Activated CD4-positive, alpha-beta T cell treated with anti-CD3 and anti-CD28 coated beads for 36 hours (primary cell): ENCODE measurements at regions of chr20 and their contacts with region 1.

Region 1: DNA sequence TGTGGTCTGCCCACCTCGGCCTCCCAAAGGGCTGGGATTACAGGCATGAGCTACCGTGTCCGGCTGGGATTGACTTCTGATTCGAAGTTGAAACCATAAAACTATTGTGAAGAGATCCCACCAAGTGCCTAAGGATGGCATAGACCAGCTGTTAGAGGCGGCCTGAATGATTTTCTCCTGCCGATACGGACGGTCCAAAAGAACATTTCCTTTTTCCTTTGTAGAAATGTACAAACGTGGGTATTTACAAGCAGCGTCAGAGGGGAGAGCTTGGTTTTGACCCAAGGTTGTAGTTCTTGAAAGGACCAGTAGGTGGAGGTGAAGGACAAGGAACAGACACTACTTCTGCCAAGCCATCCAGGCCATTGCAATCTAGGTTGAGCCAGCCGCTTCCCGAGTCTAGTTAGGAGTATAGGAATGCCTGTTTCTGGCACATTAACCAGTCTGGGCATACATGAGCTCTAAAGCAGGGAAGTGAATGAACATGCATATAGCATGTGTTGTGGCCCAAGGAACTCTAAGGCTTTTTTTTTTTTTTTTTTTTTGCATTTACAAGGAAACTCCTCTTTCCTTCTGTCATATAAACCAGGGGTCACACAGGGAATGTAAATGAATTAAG is 29.1 kb downstream of the MOCS3 start:
- DNase-seq: peak; percentile 71
- ATAC-seq: peak; percentile 89
- H3K4me3 Mint-ChIP-seq: no peak overlapping the region
- H3K27ac Mint-ChIP-seq: no peak overlapping the region
- H3K4me1 Mint-ChIP-seq: no peaks in the 10 kb centered on the region
- H3K27me3 Mint-ChIP-seq: peaks cover 23% of the 10 kb centered on the region

Region 2: DNA sequence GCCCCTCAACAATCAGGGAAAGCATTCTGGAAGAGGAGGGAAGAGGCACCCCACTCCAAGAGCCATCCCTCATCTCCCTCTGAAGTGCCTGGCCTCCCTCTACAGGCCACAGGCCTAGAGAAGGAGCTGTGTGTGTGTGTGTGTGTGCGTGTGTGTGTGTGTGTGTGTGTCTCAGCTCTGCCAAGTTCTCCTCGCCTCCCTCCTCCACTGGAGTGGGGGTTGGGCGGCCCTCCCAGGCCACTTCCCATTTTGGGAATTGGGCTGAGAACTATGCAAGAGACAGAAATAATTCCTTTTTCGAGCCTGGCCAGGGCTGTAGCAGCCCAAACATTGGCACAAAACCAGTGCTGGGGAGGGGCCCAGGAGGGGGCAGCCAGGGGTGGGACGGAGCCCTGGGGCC is 1540.9 kb before region 1 on chr20:
- CTCF ChIA-PET with region 1: no interaction called
- POLR2A ChIA-PET with region 1: no interaction called
- intact Hi-C with region 1: no loop called
- DNase-seq: no peak
- ATAC-seq: no peak
- H3K4me3 Mint-ChIP-seq: no peak overlapping the region
- H3K27ac Mint-ChIP-seq: no peak overlapping the region
- H3K4me1 Mint-ChIP-seq: no peaks in the 10 kb centered on the region
- H3K27me3 Mint-ChIP-seq: peaks cover 32% of the 10 kb centered on the region

Region 3: GRCh38 chr20:51014797-51015722 is 27.4 kb after region 1 on chr20:
- CTCF ChIA-PET with region 1: interaction called, 10 read pairs
- POLR2A ChIA-PET with region 1: no interaction called
- intact Hi-C with region 1: no loop called
- DNase-seq: peak; percentile 64
- ATAC-seq: peak; percentile 49
- H3K4me3 Mint-ChIP-seq: no peak overlapping the region
- H3K27ac Mint-ChIP-seq: no peak overlapping the region
- H3K4me1 Mint-ChIP-seq: peaks cover 3% of the 10 kb centered on the region
- H3K27me3 Mint-ChIP-seq: peaks cover 18% of the 10 kb centered on the region

Region 4: DNA sequence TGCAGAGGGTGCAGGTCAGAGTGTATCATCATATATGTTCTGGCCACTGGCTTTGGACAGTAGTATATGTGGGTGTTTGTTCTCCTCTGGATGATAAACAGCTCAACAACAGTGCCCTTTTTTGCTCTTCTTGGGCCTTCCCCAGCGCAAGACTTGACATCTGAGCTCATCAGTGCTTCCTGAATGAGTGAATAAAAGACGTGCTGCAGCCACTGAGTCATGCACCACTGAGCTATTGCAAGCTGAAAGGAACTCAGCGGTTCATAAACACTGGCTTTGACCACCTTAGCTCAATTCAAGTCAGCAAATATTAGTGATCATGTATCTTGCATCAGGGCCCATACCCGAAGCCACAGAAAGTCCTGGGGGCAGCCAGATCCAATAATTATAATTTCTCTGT is 140.5 kb after region 1 on chr20:
- CTCF ChIA-PET with region 1: interaction called, 10 read pairs
- POLR2A ChIA-PET with region 1: no interaction called
- intact Hi-C with region 1: no loop called
- DNase-seq: peak; percentile 61
- ATAC-seq: peak; percentile 93
- H3K4me3 Mint-ChIP-seq: no peak overlapping the region
- H3K27ac Mint-ChIP-seq: peak overlapping the region; percentile 29
- H3K4me1 Mint-ChIP-seq: peaks cover 15% of the 10 kb centered on the region
- H3K27me3 Mint-ChIP-seq: peaks cover 13% of the 10 kb centered on the region

Region 5: DNA sequence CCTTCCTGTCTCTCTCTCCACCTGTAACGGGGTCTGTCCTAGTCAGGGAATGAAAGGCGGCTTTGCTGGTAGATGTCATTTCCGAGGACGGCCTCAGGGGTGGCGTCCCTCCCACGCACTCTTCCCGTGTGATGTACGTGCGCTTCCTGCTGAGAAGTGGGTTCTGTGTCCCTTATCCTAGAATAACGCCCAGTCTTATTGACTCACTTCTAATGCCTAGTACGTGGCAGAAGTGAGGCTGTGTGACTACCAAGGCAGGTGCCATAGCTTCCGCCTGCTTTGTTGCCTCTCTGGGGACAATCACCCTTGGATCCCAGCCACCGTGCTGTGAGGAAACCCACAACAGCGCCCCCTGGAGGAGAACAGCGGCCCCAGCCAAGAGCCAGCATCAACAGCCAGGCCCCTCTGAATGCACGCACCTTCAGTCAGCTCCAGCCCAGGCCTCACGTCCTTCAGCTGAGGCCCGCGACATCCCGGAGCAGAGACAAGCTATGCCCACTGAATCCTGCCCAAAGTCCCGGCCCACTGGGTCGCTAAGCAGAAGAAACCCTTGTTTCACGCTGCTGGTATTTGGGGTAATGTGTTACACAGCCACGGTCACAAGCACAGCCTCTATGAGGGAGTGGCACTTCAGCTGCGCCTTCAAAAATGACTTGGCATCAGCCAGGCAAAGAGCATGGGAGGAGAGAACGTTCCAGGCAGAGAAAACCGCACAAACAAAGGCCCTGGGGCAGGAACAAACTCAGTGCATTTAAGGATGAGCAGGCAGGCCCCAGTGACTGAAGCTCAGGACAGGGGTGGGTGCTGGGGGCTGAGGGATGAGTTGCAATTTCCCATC is 330.6 kb after region 1 on chr20:
- CTCF ChIA-PET with region 1: interaction called, 126 read pairs
- POLR2A ChIA-PET with region 1: no interaction called
- intact Hi-C with region 1: loop called in 1 of 2 experiments (anchors 1 kb)
- DNase-seq: peak; percentile 83
- ATAC-seq: peak; percentile 82
- H3K4me3 Mint-ChIP-seq: no peak overlapping the region
- H3K27ac Mint-ChIP-seq: peak overlapping the region; percentile 66
- H3K4me1 Mint-ChIP-seq: no peaks in the 10 kb centered on the region
- H3K27me3 Mint-ChIP-seq: no peaks in the 10 kb centered on the region

Region 6: DNA sequence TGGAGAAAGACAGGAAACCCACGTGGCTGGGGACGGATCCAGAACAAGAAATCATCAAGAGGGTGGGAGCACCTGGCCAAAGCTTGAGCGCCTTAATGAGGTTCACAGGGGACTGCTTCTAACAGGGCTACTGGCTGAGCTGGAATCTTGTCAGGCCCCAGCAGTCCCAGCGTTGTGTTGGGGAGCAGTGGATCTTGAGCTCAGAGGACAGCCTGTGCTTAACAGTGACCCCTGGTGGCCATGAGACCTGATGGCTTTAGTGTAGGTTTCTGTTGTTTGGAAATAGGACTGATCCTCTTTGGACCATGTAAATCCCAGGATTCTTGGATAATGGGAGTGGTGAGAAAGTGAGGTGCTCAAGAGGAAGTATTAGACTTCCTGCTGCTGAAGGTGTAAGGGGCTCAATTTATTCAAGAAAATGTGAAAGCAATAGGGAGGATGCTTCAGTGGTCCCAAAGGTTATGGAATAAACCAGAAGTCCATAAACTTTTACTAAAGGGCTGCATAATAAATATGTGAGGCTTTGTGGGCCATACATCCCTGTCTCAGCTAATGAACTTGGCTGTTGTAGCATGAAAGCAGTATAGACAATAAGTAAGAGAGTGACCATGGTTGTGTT is 338.6 kb after region 1 on chr20:
- CTCF ChIA-PET with region 1: interaction called, 126 read pairs
- POLR2A ChIA-PET with region 1: no interaction called
- intact Hi-C with region 1: loop called (anchors 1 kb)
- DNase-seq: peak; percentile 78
- ATAC-seq: peak; percentile 36
- H3K4me3 Mint-ChIP-seq: no peak overlapping the region
- H3K27ac Mint-ChIP-seq: no peak overlapping the region
- H3K4me1 Mint-ChIP-seq: no peaks in the 10 kb centered on the region
- H3K27me3 Mint-ChIP-seq: peaks cover 2% of the 10 kb centered on the region